Posterior vena cava (tissue), 2 donors: ENCODE measurements at regions of chr18 and their contacts with region 1.

Region 1: GRCh38 chr18:57276739-57277298 is 75.5 kb upstream of the ST8SIA3 start:
- DNase-seq: no peak

Region 2: DNA sequence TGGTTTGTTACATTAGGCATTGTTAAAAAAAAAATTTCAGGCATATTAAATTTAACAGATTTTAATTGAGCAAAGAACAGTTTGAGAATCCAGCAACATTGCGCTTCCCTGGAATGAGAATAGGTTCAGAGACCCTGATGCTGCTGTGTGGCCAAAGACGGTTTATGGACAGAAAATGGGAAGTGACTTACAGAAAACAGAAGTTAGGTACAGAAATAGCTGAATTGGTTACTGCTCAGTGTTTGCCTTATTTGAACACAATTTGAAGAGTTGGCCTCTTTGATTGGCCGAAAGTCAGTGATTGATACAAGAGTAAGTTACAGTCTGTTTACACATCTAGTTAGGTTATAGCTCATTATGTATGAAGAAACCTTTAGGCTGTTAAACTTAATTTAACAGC is 761.2 kb after region 1 on chr18:
- intact Hi-C with region 1: loop called in 1 of 2 experiments (anchors 10 kb)
- DNase-seq: no peak